IMR-90 (cell line): ENCODE measurements at regions of chr7 and their contacts with region 1.

Region 1: DNA sequence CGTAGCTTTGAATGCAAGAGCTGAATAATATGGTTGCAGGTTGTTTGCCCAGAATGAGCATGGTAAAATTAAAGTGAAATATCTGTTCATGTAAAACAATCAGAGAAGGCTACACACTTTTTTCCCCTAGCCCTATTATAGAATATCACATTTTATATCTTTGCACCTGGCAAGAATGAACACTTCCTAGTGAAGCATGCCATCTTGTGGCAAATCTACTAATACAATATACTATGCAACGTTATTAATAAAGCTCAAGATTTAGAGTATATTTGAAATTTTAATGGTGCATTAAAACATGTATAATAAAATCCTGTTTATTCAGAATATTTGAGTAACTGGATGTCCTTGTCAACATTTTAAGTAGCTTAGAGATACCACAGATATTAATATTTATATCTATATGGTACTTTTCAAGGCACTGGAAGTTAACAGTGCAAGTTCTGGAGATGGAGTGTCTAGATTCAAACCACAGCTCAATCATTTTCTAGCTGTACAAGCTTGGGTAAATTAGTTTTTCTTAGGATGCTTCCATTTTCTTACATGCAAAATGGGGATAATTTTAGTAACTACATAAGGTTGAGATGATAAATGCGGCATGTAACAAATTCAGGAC is 643.1 kb upstream of the SEMA3D start:
- DNase-seq: peak; percentile 11
- ATAC-seq: 0 out of 2 replicates have a peak, but pooled peaks have one; percentile 57
- H3K4me3 ChIP-seq: no peak overlapping the region
- H3K27ac ChIP-seq: no peak overlapping the region
- H3K4me1 ChIP-seq: no peaks in the 10 kb centered on the region
- H3K27me3 ChIP-seq: no peaks in the 10 kb centered on the region
- CTCF ChIP-seq: peak; percentile 52
- POLR2A ChIP-seq: no peak
- RAD21 ChIP-seq: peak; percentile 62

Region 2: DNA sequence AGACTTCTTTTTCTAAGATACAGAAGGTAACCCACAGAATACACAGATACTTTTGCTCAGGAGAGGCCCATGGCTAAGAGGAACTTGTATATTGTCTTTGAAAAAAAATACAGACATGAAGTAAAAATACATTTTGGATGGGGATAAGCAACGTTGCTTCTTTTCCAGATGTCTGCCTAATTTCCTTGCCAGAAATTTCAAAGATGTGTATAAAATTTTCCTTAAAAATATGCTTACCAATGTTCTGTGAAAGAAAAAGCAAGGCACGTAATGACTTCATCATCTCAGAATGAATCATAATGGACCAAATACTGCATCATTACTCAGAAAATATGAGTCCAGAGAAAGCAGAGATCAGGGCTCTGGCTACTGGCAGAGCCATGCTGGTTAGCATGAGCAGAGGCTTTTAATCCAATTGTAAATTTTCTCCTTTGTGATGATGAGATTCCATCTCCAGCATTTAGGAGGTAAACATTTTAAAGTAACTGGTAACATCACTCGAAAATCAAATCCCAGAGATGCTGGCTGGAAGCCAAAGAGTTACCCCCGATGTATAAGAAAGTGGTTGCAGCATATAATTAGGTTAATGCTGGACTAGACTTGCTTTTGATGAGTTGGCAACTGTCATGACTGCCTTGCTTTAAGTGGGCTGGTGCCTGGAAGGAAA is 1907.9 kb before region 1 on chr7:
- CTCF ChIA-PET with region 1: no interaction called
- POLR2A ChIA-PET with region 1: no interaction called
- dilution Hi-C with region 1: no loop called
- in situ Hi-C with region 1: loop called (anchors 25 kb)
- intact Hi-C with region 1: no loop called
- DNase-seq: peak; percentile 69
- ATAC-seq: peak; percentile 81
- H3K4me3 ChIP-seq: no peak overlapping the region
- H3K27ac ChIP-seq: no peak overlapping the region
- H3K4me1 ChIP-seq: no peaks in the 10 kb centered on the region
- H3K27me3 ChIP-seq: no peaks in the 10 kb centered on the region
- CTCF ChIP-seq: no peak
- POLR2A ChIP-seq: no peak
- RAD21 ChIP-seq: no peak

Region 3: DNA sequence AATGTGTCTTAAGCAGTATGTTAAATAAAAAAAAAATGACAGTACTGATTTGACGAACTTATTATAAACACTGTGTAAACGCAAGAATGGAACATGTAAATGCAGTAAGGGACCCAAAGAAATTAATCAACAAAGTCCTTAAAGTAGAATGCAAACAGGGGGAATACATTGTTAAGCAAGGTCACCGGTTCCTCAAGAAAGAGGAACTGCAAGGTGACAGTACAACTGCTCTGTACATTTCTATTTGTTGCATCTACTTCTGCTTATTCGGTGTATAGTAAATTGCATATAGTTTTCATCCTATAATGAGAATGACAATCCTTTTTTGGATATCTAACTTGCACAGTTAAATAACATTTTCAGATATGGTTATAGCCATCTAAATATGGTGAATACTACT is 256.1 kb before region 1 on chr7:
- CTCF ChIA-PET with region 1: no interaction called
- POLR2A ChIA-PET with region 1: no interaction called
- dilution Hi-C with region 1: no loop called
- in situ Hi-C with region 1: no loop called
- intact Hi-C with region 1: loop called (anchors 5 kb)
- DNase-seq: no peak
- ATAC-seq: no peak
- H3K4me3 ChIP-seq: no peak overlapping the region
- H3K27ac ChIP-seq: no peak overlapping the region
- H3K4me1 ChIP-seq: no peaks in the 10 kb centered on the region
- H3K27me3 ChIP-seq: no peaks in the 10 kb centered on the region; the same call in 1 of the 2 replicates
- CTCF ChIP-seq: no peak
- POLR2A ChIP-seq: no peak
- RAD21 ChIP-seq: no peak

Region 4: DNA sequence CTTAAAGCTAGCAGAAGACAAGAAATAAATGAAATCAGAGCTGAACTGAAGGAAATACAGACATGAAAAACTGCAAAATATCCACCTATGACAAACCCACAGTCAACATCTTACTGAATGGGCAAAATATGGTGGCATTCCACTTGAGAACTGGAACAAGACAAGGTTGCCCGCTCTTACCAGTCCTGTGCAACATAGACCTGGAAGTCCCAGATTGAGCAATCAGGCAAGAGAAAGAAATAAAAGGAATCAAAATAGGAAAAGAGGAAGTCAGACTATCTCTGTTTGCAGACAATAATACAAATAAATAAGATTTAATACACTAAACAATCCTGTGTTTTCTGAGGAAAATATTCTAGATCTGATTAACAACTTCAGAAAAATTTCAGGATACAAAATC is 72.6 kb before region 1 on chr7:
- CTCF ChIA-PET with region 1: no interaction called
- POLR2A ChIA-PET with region 1: no interaction called
- dilution Hi-C with region 1: no loop called
- in situ Hi-C with region 1: no loop called
- intact Hi-C with region 1: no loop called
- DNase-seq: no peak
- ATAC-seq: no peak
- H3K4me3 ChIP-seq: no peak overlapping the region
- H3K27ac ChIP-seq: no peak overlapping the region
- H3K4me1 ChIP-seq: no peaks in the 10 kb centered on the region
- H3K27me3 ChIP-seq: no peaks in the 10 kb centered on the region
- CTCF ChIP-seq: no peak
- POLR2A ChIP-seq: no peak
- RAD21 ChIP-seq: no peak